Aorta (tissue), 5 donors: ENCODE measurements at regions of chr17 and their contacts with region 1.

Region 1: DNA sequence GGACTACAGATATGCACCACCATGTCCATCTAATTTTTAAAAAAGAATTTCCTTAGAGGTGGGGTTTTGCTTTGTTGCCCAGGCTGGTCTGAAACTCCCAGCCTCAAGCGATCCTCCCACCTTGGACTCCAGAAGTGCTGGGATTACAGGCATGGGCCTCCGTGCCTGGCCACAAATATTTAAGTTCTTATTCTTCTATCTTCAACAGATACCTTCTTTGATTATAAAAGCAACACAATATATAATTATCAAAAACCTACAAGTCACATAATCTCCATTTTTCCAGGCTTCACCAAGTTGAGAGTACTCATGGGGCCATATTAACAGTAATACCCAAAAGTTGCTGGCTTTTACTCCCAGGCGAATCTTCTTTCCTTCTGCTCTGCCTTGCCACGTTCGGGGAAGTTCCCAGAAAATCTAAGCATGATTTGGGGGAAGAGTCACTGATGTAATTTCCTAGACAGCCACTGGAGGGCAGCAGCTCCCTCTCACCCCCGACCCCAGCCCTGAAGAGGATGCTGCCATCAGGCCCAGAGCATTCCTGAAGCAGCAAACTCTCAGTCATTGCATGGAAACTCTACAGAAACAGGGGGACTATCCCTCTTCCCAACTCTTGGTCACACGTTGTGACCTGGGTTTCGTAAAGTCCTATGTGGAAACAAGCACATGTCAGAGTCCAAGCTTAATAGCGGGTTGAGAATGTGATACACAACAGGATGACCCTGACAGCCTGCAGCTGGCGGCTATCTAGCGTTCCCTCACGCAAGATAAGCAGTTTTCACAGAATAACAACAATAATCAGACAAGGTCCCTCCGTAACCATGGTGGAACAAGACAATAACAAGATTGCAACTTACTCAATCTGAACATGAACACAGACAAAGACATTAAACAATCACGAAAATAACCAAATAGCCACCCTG is 43.9 kb upstream of the DHX40 start:
- DNase-seq: peak; percentile 63 to 81
- ATAC-seq: peak; percentile 76
- H3K4me3 ChIP-seq: no peak overlapping the region
- H3K27ac ChIP-seq: no peak overlapping the region
- H3K4me1 ChIP-seq: no peaks in the 10 kb centered on the region
- H3K27me3 ChIP-seq: no peaks in the 10 kb centered on the region

Region 2: DNA sequence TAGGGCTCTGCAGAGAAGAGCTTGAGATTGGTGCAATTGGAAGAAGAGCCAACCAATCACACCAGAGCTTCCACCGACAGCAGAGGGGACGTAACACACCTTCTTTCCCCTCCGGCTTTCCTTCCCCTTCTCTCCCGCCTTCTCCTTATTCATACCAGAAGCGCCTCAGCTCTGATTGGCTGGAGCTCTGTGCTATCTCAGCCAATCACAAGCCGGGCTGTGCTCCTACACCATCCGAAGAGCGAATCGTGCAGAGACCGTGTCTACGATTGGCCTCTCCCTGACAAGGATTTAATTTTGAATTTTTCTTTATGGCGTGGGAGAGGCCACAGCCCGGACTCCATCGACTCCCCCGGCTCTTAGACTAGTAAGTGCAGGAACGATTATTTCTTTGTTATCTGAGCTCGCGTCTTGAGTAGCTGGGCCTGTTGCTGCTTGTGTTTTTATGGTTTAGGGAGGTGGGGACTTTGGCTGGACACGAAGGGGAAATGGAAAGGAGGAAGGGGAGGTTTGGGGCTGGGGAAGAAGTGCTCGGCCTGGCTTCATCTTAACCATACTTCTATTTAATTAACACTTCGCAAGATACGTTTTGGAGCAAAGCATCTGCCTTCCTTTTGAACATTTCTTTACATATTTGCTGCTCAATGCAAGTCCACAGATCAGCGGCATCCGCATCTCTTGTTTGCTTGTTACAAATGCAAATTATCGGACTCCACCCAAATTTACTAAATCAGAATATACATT is 365.9 kb before region 1 on chr17 and contains the start of gene PRR11:
- intact Hi-C with region 1: no loop called
- DNase-seq: peak; percentile 95 to 96
- ATAC-seq: peak; percentile 97
- H3K4me3 ChIP-seq: peak within 1 kb of the TSS; percentile 58 to 62
- H3K27ac ChIP-seq: peak within 1 kb of the TSS in 1 of 2 donors; percentile 79
- H3K4me1 ChIP-seq: peaks cover 0 to 1% of the 10 kb centered on the region in 2 donors
- H3K27me3 ChIP-seq: no peaks in the 10 kb centered on the region
- total RNA-seq, gene PRR11: 0.62 to 2.9 TPM

Region 3: GRCh38 chr17:59304811-59305210 is 216.7 kb before region 1 on chr17:
- intact Hi-C with region 1: loop called in 1 of 2 experiments (anchors 5 kb)
- DNase-seq: no peak
- ATAC-seq: no peak
- H3K4me3 ChIP-seq: no peak overlapping the region
- H3K27ac ChIP-seq: no peak overlapping the region
- H3K4me1 ChIP-seq: no peaks in the 10 kb centered on the region
- H3K27me3 ChIP-seq: no peaks in the 10 kb centered on the region

Region 4: DNA sequence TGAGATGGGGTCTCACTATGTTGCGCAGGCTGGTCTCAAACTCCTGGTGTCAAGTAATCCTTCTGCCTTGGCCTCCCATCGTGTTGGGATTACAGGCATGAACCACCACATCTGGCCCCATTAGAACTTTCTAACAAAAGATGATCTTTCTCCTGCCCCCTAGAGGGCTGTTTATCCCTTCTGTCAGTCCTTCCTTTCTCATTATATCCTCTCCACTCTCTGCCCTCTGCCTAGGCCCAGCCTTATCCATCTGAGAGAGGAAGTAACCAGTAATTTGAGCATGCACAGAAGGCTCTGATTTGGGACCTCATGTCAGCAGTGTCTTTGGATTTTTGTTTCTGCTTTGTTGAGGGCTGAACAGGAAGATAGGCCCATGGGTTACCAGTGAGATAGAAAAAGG is 39.6 kb after region 1 on chr17:
- intact Hi-C with region 1: no loop called
- DNase-seq: no peak
- ATAC-seq: no peak
- H3K4me3 ChIP-seq: no peak overlapping the region
- H3K27ac ChIP-seq: no peak overlapping the region
- H3K4me1 ChIP-seq: no peaks in the 10 kb centered on the region
- H3K27me3 ChIP-seq: no peaks in the 10 kb centered on the region